ENCODE measurements at regions of chr12 and their contacts with region 1.

Region 1: DNA sequence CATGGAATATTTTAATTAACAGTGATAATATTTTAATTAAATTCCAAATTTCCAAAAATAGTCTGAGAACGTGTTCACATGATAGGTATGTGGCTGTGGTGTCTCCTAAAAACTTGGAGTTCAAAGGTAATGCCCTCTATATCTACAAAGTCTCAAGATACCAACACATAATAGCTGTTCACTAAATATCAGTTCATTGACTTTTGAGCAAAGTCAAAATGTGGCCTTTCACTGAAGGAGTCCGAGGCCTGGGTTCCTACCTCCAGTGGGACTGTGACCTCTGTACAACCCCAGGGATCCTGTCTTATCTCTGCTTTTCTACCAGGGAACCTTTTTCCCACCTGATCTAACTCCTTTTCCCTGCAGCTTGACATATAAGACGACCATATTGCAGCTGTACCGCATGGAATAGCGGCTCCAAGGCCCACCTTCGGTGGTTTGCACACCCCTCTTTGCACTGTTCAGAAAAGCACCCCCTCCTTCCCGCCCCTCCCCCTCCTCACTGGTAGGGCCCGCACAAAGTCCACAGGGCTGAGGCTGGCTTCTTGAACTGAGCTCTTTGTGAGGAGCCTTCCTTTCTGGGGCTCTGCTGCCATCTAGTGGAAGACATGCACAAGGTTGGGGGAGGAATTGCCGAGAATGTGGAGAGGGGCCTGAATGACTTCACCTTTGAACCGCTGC is 3.1 kb downstream of the CCND2 start:
- DNase-seq: peak; percentile 69
- H3K4me3 ChIP-seq: no peak overlapping the region
- H3K27ac ChIP-seq: no peak overlapping the region
- H3K27me3 ChIP-seq: peaks cover 65% of the 10 kb centered on the region
- CTCF ChIP-seq: peak; percentile 97

Region 2: GRCh38 chr12:3872800-3873636 is 403.6 kb before region 1 on chr12 and contains the start of gene PARP11:
- CTCF ChIA-PET with region 1: interaction called, 11 read pairs
- POLR2A ChIA-PET with region 1: no interaction called
- DNase-seq: peak; percentile 88
- H3K4me3 ChIP-seq: peak within 1 kb of the TSS; percentile 79
- H3K27ac ChIP-seq: peak within 1 kb of the TSS; percentile 95
- H3K27me3 ChIP-seq: no peaks in the 10 kb centered on the region
- CTCF ChIP-seq: no peak
- polyA plus RNA-seq, gene PARP11: 5.4 and 6.9 TPM in 2 replicates

Region 3: GRCh38 chr12:3998968-3999826 is 277.5 kb before region 1 on chr12:
- CTCF ChIA-PET with region 1: interaction called, 46 read pairs
- POLR2A ChIA-PET with region 1: no interaction called
- DNase-seq: no peak
- H3K4me3 ChIP-seq: no peak overlapping the region
- H3K27ac ChIP-seq: no peak overlapping the region
- H3K27me3 ChIP-seq: peaks cover 6% of the 10 kb centered on the region
- CTCF ChIP-seq: no peak

Region 4: GRCh38 chr12:4107436-4107878 is 169.2 kb before region 1 on chr12:
- CTCF ChIA-PET with region 1: interaction called, 107 read pairs
- POLR2A ChIA-PET with region 1: no interaction called
- DNase-seq: peak; percentile 8
- H3K4me3 ChIP-seq: no peak overlapping the region
- H3K27ac ChIP-seq: no peak overlapping the region
- H3K27me3 ChIP-seq: peaks cover 3% of the 10 kb centered on the region
- CTCF ChIP-seq: peak; percentile 75

Region 5: GRCh38 chr12:4135919-4136605 is 140.6 kb before region 1 on chr12:
- CTCF ChIA-PET with region 1: interaction called, 12 read pairs
- POLR2A ChIA-PET with region 1: no interaction called
- DNase-seq: no peak
- H3K4me3 ChIP-seq: no peak overlapping the region
- H3K27ac ChIP-seq: no peak overlapping the region
- H3K27me3 ChIP-seq: no peaks in the 10 kb centered on the region
- CTCF ChIP-seq: no peak

Region 6: GRCh38 chr12:4289231-4289878 is 12.7 kb after region 1 on chr12:
- CTCF ChIA-PET with region 1: interaction called, 18 read pairs
- POLR2A ChIA-PET with region 1: no interaction called
- DNase-seq: no peak
- H3K4me3 ChIP-seq: no peak overlapping the region
- H3K27ac ChIP-seq: no peak overlapping the region
- H3K27me3 ChIP-seq: peaks cover 5% of the 10 kb centered on the region
- CTCF ChIP-seq: no peak

Region 7: DNA sequence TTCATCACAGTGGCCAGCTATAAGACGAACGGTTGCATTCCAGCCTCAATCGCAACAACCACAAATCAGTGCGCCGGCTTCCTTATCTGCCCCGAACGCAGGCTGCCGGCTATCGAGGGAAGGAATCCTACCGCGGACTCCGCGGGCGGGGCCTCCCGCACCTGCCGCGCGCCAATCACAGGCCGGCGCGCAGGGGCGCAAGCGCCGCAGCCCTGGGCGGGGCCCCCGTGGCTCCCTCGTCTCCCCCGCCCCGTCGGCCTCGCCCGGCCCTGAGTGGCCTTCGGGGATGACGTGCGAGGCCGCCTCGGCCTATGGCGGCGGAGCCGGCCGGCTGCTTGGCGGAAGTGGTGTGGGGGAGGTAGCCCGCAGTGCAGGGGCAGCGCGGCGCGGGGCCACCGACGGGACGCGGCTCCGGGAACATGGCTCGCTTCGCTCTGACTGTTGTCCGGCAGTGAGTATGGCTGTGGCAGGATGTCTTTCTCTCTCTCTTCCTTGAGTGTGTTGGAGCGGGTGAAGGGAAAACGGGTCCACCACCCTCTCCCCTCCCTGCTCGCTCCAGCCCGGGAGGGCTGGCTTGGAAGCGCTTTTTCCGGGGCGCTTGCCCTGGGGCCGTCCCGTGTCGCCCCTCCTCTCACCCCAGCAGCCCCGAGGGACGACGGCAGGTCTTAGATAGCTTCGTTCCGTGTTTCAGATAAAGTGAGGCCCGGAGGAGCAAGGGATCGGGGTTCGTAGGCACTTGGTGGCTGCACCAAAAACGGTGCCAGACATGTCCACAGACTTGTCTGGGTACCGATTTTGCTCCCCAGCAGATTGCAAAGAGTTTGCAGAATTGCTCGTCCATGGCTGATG is 44.4 kb after region 1 on chr12 and contains the start of gene TIGAR:
- CTCF ChIA-PET with region 1: interaction called, 10 read pairs
- POLR2A ChIA-PET with region 1: no interaction called
- DNase-seq: peak; percentile 80
- H3K4me3 ChIP-seq: peak within 1 kb of the TSS; percentile 90
- H3K27ac ChIP-seq: peak within 1 kb of the TSS; percentile 88
- H3K27me3 ChIP-seq: no peaks in the 10 kb centered on the region
- CTCF ChIP-seq: no peak
- polyA plus RNA-seq, gene TIGAR: 24.5 and 28.8 TPM in 2 replicates

Region 8: GRCh38 chr12:4579305-4580102 is 302.8 kb after region 1 on chr12:
- CTCF ChIA-PET with region 1: no interaction called
- POLR2A ChIA-PET with region 1: no interaction called
- DNase-seq: no peak
- H3K4me3 ChIP-seq: no peak overlapping the region
- H3K27ac ChIP-seq: no peak overlapping the region
- H3K27me3 ChIP-seq: peaks cover 3% of the 10 kb centered on the region
- CTCF ChIP-seq: 0 out of 2 replicates have a peak, but pooled peaks have one; percentile 7

Measured in AG04450 (cell line).